Ascending aorta (tissue), 2 donors: ENCODE measurements at regions of chr17 and their contacts with region 1.

Region 1: GRCh38 chr17:81484195-81484979 is 28.2 kb downstream of the ACTG1 start:
- DNase-seq: peak; percentile 49 to 93
- H3K4me3 ChIP-seq: peak overlapping the region; percentile 51 to 62
- H3K27ac ChIP-seq: no peak overlapping the region
- H3K4me1 ChIP-seq: peaks cover 11 to 37% of the 10 kb centered on the region in 2 donors
- H3K27me3 ChIP-seq: no peaks in the 10 kb centered on the region
- CTCF ChIP-seq: peak; percentile 86 to 100 (median 90)

Region 2: GRCh38 chr17:81253358-81254131 is 230.8 kb before region 1 on chr17:
- intact Hi-C with region 1: loop called (anchors 1 kb)
- DNase-seq: no peak
- H3K4me3 ChIP-seq: no peak overlapping the region
- H3K27ac ChIP-seq: no peak overlapping the region
- H3K4me1 ChIP-seq: peaks cover 0 to 13% of the 10 kb centered on the region in 2 donors
- H3K27me3 ChIP-seq: no peaks in the 10 kb centered on the region
- CTCF ChIP-seq: peak; percentile 75 to 82 (median 76)

Region 3: GRCh38 chr17:81346090-81346907 is 138.1 kb before region 1 on chr17:
- intact Hi-C with region 1: loop called (anchors 2 kb)
- DNase-seq: peak; percentile 93 to 99
- H3K4me3 ChIP-seq: peak overlapping the region; percentile 83 to 94
- H3K27ac ChIP-seq: peak overlapping the region; percentile 82 to 91
- H3K4me1 ChIP-seq: peaks cover 0 to 22% of the 10 kb centered on the region in 2 donors
- H3K27me3 ChIP-seq: no peaks in the 10 kb centered on the region
- CTCF ChIP-seq: no peak

Region 4: GRCh38 chr17:81401723-81402529 is 82.5 kb before region 1 on chr17:
- intact Hi-C with region 1: loop called (anchors 1 kb)
- DNase-seq: no peak
- H3K4me3 ChIP-seq: peak overlapping the region in 1 of 2 donors; percentile 91
- H3K27ac ChIP-seq: peak overlapping the region; percentile 91 to 98
- H3K4me1 ChIP-seq: peaks cover 28 to 54% of the 10 kb centered on the region in 2 donors
- H3K27me3 ChIP-seq: no peaks in the 10 kb centered on the region
- CTCF ChIP-seq: peak in 2 of 3 experiments; percentile 19 to 37

Region 5: GRCh38 chr17:81523475-81524340 is 39.3 kb after region 1 on chr17:
- intact Hi-C with region 1: no loop called
- DNase-seq: peak in 1 of 2 donors; percentile 78
- H3K4me3 ChIP-seq: no peak overlapping the region
- H3K27ac ChIP-seq: no peak overlapping the region
- H3K4me1 ChIP-seq: peaks cover 21 to 30% of the 10 kb centered on the region in 2 donors
- H3K27me3 ChIP-seq: no peaks in the 10 kb centered on the region
- CTCF ChIP-seq: no peak

Region 6: GRCh38 chr17:81553018-81553615 is 68.7 kb after region 1 on chr17:
- intact Hi-C with region 1: loop called (anchors 2 kb)
- DNase-seq: peak; percentile 59 to 90
- H3K4me3 ChIP-seq: peak overlapping the region; percentile 81 to 83
- H3K27ac ChIP-seq: peak overlapping the region; percentile 75 to 93
- H3K4me1 ChIP-seq: peaks cover 17 to 34% of the 10 kb centered on the region in 2 donors
- H3K27me3 ChIP-seq: no peaks in the 10 kb centered on the region
- CTCF ChIP-seq: no peak